Activated CD4-positive, alpha-beta T cell treated with anti-CD3 and anti-CD28 coated beads, Interleukin-2, amount 10 ng/mL, durations not matched to agents 24 days and 14 days (primary cell): ENCODE measurements at regions of chr5 and their contacts with region 1.

Region 1: DNA sequence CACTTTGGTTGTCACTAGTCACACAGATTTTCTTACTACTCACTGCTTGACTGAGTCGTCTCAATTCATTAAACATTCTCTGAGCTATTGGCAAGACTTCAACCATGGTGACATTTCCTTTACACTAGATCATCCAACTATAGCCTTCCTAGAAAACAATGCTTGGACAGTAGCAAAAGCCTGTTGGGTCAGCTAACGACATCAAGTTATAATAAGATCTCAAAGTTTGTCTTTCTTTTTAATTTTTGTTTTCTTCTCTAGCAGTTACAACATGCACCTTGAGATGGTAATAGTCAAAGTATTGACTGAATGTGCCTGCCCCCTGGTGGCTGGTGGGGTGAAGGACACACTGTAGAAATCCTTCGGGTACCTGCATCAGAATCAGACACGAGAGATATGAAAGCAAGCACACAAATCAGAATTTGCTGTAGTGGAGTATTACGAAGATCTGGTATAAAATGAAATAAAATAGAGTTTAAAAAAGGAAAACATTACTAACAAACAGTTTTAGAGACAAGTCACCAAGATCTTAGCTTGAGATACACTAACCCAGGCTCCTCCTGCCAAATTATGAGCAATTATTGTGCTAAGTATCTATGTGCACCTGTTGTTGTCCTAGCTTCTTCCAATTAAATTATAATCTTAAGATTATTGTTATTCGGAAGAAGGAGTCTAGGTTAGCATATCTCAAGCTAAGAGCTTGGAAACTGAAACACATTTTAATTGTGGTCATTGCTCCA is 81.2 kb downstream of the ARL15 start:
- DNase-seq: peak; percentile 90
- H3K4me3 Mint-ChIP-seq: no peak overlapping the region
- H3K27ac Mint-ChIP-seq: no peak overlapping the region
- H3K4me1 Mint-ChIP-seq: peaks cover 2% of the 10 kb centered on the region
- H3K27me3 Mint-ChIP-seq: peaks cover 14% of the 10 kb centered on the region

Region 2: GRCh38 chr5:52948418-52949076 is 1280.7 kb before region 1 on chr5:
- intact Hi-C with region 1: loop called (anchors 10 kb)
- DNase-seq: peak; percentile 92
- H3K4me3 Mint-ChIP-seq: no peak overlapping the region
- H3K27ac Mint-ChIP-seq: peak overlapping the region; percentile 46
- H3K4me1 Mint-ChIP-seq: peaks cover 19% of the 10 kb centered on the region
- H3K27me3 Mint-ChIP-seq: peaks cover 1% of the 10 kb centered on the region

Region 3: DNA sequence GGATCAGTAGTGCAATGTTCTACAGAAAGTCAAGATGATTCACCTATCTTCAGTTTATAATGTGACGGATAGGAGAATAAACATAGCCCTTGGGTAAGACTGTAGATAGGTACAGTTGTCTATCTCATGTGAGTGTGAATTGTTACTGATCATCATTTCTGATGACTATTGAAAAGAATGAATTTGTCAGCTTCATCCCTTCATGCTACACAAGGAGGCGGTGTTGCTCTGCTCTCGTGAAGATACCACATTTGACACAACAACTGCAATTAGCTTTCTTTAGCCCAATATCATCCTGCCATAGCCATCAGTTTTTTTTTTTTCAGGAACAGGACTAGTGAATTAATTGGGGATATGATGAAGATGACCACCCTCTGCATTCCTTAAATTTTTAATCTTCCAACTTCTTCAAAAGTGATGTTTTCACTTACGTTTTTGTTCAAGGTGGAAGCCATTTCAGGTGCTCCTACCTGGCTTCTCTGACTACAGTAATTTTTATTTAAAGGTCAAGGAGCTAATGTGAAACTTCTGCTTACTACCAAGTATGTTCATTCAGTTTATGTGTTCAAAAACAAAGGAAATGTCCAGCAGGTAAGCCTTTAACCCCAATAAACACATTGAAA is 966.8 kb before region 1 on chr5:
- intact Hi-C with region 1: loop called (anchors 5 kb)
- DNase-seq: no peak
- H3K4me3 Mint-ChIP-seq: no peak overlapping the region
- H3K27ac Mint-ChIP-seq: no peak overlapping the region
- H3K4me1 Mint-ChIP-seq: no peaks in the 10 kb centered on the region
- H3K27me3 Mint-ChIP-seq: peaks cover 2% of the 10 kb centered on the region

Region 4: DNA sequence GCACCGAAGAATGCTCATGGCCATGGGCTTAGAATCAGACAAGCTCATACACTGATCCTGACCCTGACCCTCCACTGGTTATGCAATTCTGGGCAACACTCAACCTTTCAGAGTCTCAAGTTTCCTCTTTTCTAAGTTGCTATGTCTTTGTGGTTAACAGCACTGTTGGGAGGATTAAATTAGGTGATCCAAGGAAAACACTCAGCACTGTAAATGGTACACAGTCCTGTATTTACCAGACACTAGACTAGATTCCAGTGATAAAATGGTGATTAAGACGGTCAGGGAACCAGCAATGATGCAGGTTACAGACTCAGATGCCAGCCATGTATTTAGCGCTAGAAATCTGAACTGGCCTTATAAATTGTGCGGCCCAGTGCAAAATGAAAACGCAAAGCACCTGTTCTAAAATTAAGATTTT is 73.1 kb after region 1 on chr5:
- intact Hi-C with region 1: no loop called
- DNase-seq: no peak
- H3K4me3 Mint-ChIP-seq: no peak overlapping the region
- H3K27ac Mint-ChIP-seq: no peak overlapping the region
- H3K4me1 Mint-ChIP-seq: peaks cover 14% of the 10 kb centered on the region
- H3K27me3 Mint-ChIP-seq: no peaks in the 10 kb centered on the region

Region 5: GRCh38 chr5:54344653-54345052 is 115.4 kb after region 1 on chr5:
- intact Hi-C with region 1: no loop called
- DNase-seq: no peak
- H3K4me3 Mint-ChIP-seq: no peak overlapping the region
- H3K27ac Mint-ChIP-seq: no peak overlapping the region
- H3K4me1 Mint-ChIP-seq: no peaks in the 10 kb centered on the region
- H3K27me3 Mint-ChIP-seq: peaks cover 2% of the 10 kb centered on the region

Region 6: DNA sequence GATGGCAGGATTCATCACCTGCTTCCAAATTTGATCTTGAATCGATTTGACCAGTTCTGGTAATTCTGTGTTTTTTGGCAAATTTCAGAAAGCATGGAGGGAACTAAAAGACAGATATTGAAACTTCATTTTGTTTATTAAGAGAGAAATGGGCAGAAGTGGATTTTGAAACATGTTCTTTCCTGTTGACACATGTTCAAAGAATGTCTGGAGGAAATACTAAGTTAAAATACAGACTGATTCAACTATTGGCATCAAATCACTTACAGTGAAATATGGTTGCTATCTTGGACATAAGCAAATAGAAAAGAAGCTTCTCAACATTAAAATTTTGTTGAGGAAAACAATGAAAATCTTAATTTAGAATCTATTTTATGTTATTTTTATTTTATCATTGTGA is 775.5 kb after region 1 on chr5:
- intact Hi-C with region 1: no loop called
- DNase-seq: no peak
- H3K4me3 Mint-ChIP-seq: no peak overlapping the region
- H3K27ac Mint-ChIP-seq: no peak overlapping the region
- H3K4me1 Mint-ChIP-seq: peaks cover 31% of the 10 kb centered on the region
- H3K27me3 Mint-ChIP-seq: peaks cover 8% of the 10 kb centered on the region